BJ (cell line): ENCODE measurements at regions of chr22 and their contacts with region 1.

Region 1: GRCh38 chr22:42649246-42650099 is at the start of gene CYB5R3:
- DNase-seq: no peak
- H3K4me3 ChIP-seq: peak within 1 kb of the TSS; percentile 90
- H3K27me3 ChIP-seq: no peaks in the 10 kb centered on the region
- CTCF ChIP-seq: no peak
- polyA plus RNA-seq, gene CYB5R3: 200 and 418 TPM in 2 replicates

Region 2: GRCh38 chr22:42604403-42604802 is 45.1 kb before region 1 on chr22:
- CTCF ChIA-PET with region 1: no interaction called
- POLR2A ChIA-PET with region 1: no interaction called
- DNase-seq: no peak
- H3K4me3 ChIP-seq: no peak overlapping the region
- H3K27me3 ChIP-seq: no peaks in the 10 kb centered on the region
- CTCF ChIP-seq: no peak

Region 3: DNA sequence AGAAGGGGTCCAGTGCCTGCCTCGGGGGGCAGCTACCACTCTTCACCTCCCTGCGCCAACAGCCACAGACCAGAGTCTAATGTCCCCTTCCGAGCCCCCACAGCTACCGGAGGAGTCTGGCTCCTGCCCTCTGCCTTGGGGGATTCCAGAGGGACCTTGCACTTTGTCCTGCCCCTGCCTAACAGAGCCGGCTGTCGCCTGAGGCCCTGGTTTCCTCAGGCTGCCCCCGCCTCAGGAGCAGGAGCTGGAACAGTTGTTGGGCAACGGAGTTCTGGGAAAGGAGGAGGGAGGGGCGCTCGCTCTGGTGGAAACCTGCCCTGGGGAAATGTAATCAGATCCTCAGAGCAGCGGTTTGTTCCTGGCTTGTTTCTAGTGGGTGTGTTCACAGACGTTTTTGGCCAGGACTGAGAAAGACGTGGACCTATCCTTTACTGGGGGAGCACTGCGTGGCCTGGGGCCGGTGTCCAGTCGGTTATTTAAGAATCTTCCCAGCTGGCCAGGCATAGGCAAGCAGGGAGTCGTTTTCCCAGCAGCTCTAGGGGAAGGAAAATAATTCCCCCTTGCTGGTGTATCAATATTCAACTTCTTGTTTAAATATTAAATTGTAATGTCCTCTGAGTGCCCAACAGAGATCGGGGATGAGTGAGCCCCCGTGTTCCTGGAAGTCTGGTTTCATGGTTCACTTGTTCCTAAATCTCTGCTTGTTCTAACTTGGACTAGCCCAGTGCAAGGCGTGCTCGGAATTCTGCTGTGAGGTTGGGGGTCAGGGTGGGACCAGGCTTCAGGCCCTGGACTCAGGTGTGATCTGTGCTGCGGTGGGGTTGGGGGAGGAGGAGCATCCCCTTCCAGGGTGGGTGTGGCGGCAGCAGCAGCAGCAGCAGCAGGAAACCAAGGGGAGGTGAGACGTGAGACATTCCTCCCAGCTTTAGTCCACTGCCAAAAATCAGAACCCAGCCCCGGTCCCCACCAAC is 39.1 kb after region 1 on chr22:
- CTCF ChIA-PET with region 1: no interaction called
- POLR2A ChIA-PET with region 1: no interaction called
- DNase-seq: peak; percentile 91
- H3K4me3 ChIP-seq: no peak overlapping the region
- H3K27me3 ChIP-seq: no peaks in the 10 kb centered on the region
- CTCF ChIP-seq: no peak

Region 4: GRCh38 chr22:42725606-42726355 is 76.3 kb after region 1 on chr22:
- CTCF ChIA-PET with region 1: no interaction called
- POLR2A ChIA-PET with region 1: interaction called, 10 read pairs
- DNase-seq: no peak
- H3K4me3 ChIP-seq: no peak overlapping the region
- H3K27me3 ChIP-seq: no peaks in the 10 kb centered on the region
- CTCF ChIP-seq: no peak